ENCODE measurements at regions of chr16 and their contacts with region 1.

Region 1: GRCh38 chr16:10964039-10964890 is 19.9 kb downstream of the CLEC16A start:
- DNase-seq: peak; percentile 93
- H3K4me3 Mint-ChIP-seq: peak overlapping the region; percentile 60
- H3K27ac Mint-ChIP-seq: peak overlapping the region; percentile 98
- H3K4me1 Mint-ChIP-seq: peaks cover 77% of the 10 kb centered on the region
- H3K27me3 Mint-ChIP-seq: no peaks in the 10 kb centered on the region

Region 2: GRCh38 chr16:10828851-10829731 is 135.2 kb before region 1 on chr16:
- CTCF ChIA-PET with region 1: no interaction called
- POLR2A ChIA-PET with region 1: no interaction called
- intact Hi-C with region 1: no loop called
- DNase-seq: no peak
- H3K4me3 Mint-ChIP-seq: no peak overlapping the region
- H3K27ac Mint-ChIP-seq: no peak overlapping the region
- H3K4me1 Mint-ChIP-seq: no peaks in the 10 kb centered on the region
- H3K27me3 Mint-ChIP-seq: peaks cover 3% of the 10 kb centered on the region

Region 3: DNA sequence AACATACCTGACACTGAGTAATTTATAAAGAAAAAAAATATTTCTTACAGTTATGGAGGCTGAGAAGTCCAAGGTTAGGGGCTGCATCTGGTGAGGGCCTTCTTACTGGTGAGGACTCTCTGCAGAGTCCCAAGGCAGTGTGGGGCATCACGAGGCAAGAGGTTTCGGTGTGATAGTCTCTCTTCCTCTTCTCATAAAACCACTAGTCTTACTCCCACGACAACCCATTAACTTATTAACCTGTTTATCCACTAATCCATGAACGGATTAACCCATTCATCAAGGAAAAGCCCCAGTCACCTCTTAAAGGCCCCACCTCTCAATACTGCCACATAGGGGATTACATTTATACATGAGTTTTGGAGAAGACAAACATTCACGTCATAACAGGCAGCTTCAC is 67.1 kb before region 1 on chr16:
- CTCF ChIA-PET with region 1: no interaction called
- POLR2A ChIA-PET with region 1: no interaction called
- intact Hi-C with region 1: no loop called
- DNase-seq: no peak
- H3K4me3 Mint-ChIP-seq: no peak overlapping the region
- H3K27ac Mint-ChIP-seq: no peak overlapping the region
- H3K4me1 Mint-ChIP-seq: no peaks in the 10 kb centered on the region
- H3K27me3 Mint-ChIP-seq: peaks cover 1% of the 10 kb centered on the region

Region 4: GRCh38 chr16:10918294-10919002 is 45.8 kb before region 1 on chr16:
- CTCF ChIA-PET with region 1: no interaction called
- POLR2A ChIA-PET with region 1: no interaction called
- intact Hi-C with region 1: no loop called
- DNase-seq: peak; percentile 92
- H3K4me3 Mint-ChIP-seq: no peak overlapping the region
- H3K27ac Mint-ChIP-seq: no peak overlapping the region
- H3K4me1 Mint-ChIP-seq: peaks cover 15% of the 10 kb centered on the region
- H3K27me3 Mint-ChIP-seq: no peaks in the 10 kb centered on the region

Region 5: DNA sequence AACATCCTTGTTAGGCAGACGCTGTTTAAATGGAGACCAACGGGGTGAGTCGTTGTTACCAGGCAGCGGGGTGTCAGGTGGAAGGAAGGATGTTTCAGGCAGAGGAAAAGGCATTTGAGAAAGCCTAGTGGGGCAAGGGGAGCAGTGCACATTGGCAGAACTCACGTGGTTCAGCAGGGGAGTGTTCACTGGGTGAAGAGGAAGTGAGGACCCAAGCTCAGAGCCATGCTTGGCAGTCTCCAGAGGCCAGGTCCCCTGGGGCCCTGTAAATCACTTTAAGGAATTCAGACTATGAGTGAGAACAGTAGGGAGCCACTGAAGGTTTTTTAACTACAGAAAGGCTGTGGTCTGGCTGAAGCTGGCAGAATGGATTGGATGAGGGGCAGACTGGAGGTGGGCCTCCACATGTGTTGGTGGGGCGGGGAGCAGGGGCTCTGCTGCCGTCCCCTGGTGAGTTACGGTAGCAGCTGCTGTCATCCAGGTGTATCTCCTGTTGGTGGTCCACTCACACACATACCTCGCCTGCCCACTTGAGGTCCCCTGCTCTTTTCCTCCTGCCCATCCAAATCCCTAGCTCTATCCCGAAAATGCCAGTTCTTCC is 14.8 kb before region 1 on chr16:
- CTCF ChIA-PET with region 1: interaction called, 62 read pairs
- POLR2A ChIA-PET with region 1: interaction called, 7 read pairs
- intact Hi-C with region 1: no loop called
- DNase-seq: peak; percentile 69
- H3K4me3 Mint-ChIP-seq: no peak overlapping the region
- H3K27ac Mint-ChIP-seq: peak overlapping the region; percentile 42
- H3K4me1 Mint-ChIP-seq: peaks cover 56% of the 10 kb centered on the region
- H3K27me3 Mint-ChIP-seq: no peaks in the 10 kb centered on the region

Region 6: GRCh38 chr16:11051879-11052808 is 87.9 kb after region 1 on chr16:
- CTCF ChIA-PET with region 1: interaction called, 37 read pairs
- POLR2A ChIA-PET with region 1: interaction called, 11 read pairs
- intact Hi-C with region 1: loop called (anchors 1 kb)
- DNase-seq: peak; percentile 94
- H3K4me3 Mint-ChIP-seq: peak overlapping the region; percentile 24
- H3K27ac Mint-ChIP-seq: peak overlapping the region; percentile 94
- H3K4me1 Mint-ChIP-seq: peaks cover 64% of the 10 kb centered on the region
- H3K27me3 Mint-ChIP-seq: no peaks in the 10 kb centered on the region

Region 7: DNA sequence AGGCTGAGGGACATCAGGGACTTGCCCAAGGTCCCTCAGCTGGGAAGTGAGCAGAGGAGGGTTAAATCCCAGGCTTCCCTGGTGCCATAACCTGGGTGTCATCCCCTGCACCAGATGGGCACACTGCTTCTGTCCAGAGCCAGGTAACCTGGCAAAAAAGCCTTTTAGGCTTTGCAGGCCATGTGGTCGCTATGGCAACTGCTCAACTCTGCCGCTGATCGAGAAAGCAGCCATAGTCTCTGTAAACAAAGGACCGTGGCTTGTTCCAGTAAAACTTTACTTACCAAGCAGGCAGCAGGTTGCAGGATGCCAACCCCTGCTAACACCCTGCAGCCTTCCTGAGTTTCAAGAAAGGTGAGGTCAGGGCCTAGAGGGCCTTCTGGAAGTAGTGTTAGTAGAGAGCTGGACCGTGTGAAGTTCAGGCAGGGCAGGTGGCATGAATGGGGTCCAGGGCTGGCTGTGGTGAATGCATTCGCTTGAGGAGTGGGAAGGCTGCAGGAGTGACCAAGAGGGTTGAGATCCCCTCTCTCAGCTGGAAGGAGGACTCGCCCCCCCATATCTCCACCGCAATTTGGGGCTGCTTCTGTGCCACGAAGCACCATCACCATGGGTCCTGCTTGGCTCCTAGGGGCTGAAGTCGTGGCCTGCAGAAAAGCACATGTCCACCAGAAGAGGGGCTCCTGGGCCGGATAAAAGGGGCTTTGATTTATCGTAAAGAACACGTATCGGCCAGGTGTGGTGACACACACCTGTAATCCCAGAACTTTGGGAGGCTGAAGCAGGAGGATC is 200.4 kb after region 1 on chr16:
- CTCF ChIA-PET with region 1: interaction called, 7 read pairs
- POLR2A ChIA-PET with region 1: interaction called, 10 read pairs
- intact Hi-C with region 1: no loop called
- DNase-seq: no peak
- H3K4me3 Mint-ChIP-seq: no peak overlapping the region
- H3K27ac Mint-ChIP-seq: peak overlapping the region; percentile 24
- H3K4me1 Mint-ChIP-seq: peaks cover 26% of the 10 kb centered on the region
- H3K27me3 Mint-ChIP-seq: no peaks in the 10 kb centered on the region

Region 8: DNA sequence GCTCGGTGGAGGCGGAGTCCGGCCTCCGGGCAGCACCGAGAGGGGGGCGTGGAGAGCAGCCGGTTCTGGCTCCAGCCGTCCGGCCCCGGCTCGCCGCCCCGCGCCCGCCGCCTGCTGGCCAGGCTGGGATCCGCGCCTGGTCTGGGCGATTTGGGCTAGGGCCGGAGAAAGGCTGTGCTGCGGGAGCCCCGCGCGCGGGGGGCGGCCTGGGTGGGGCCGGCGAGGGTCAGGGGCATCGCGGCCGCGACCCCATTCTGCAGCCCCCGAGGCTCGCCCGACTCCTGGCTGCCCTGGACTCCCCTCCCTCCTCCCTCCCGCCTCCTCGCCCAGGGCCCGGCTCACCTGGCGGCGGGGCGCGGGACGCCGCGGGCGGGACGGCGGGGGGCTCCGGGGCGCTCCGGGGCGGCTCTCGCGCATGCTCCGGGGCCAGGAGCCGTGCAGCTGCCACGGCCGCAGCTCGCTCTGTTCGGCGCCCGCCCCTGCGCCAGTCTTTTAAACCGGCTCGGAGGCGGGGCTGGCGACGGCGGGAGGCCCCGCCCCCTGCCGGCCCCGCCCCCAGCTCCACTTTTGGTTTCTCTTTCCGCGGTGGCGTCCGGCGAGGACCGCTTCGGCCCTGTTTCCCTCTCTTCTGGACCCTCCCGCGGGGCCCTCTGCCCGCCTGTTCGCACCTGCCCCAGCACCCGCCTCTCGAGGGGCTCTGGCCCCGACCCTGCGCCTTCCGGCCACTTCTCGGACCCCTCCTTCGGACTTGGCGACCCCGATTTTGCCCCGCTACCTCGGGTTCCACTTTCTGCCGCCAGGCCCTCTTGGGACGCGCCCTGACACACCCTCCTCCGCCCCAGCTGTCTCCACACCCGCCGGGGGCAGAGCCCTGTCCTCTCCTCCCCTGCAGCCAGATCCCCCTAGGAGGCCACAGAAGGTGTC is 291.7 kb after region 1 on chr16 and contains the start of gene SOCS1:
- CTCF ChIA-PET with region 1: interaction called, 118 read pairs
- POLR2A ChIA-PET with region 1: interaction called, 93 read pairs
- intact Hi-C with region 1: loop called (anchors 1 kb)
- DNase-seq: peak; percentile 92
- H3K4me3 Mint-ChIP-seq: peak within 1 kb of the TSS; percentile 98
- H3K27ac Mint-ChIP-seq: peak within 1 kb of the TSS; percentile 99
- H3K4me1 Mint-ChIP-seq: peaks cover 48% of the 10 kb centered on the region
- H3K27me3 Mint-ChIP-seq: peaks cover 6% of the 10 kb centered on the region
- total RNA-seq, gene SOCS1: 146 to 152 TPM

Region 9: GRCh38 chr16:11379420-11379819 is 415.2 kb after region 1 on chr16:
- CTCF ChIA-PET with region 1: interaction called, 20 read pairs
- POLR2A ChIA-PET with region 1: interaction called, 6 read pairs
- intact Hi-C with region 1: loop called (anchors 1 kb)
- DNase-seq: peak; percentile 88
- H3K4me3 Mint-ChIP-seq: peak overlapping the region; percentile 9
- H3K27ac Mint-ChIP-seq: peak overlapping the region; percentile 79
- H3K4me1 Mint-ChIP-seq: peaks cover 23% of the 10 kb centered on the region
- H3K27me3 Mint-ChIP-seq: peaks cover 2% of the 10 kb centered on the region

Region 10: GRCh38 chr16:11667824-11668622 is 703.8 kb after region 1 on chr16 and contains the start of gene SNN:
- CTCF ChIA-PET with region 1: interaction called, 3 read pairs
- POLR2A ChIA-PET with region 1: no interaction called
- intact Hi-C with region 1: loop called (anchors 10 kb)
- DNase-seq: peak; percentile 91
- H3K4me3 Mint-ChIP-seq: peak within 1 kb of the TSS; percentile 72
- H3K27ac Mint-ChIP-seq: peak within 1 kb of the TSS; percentile 5
- H3K4me1 Mint-ChIP-seq: peaks cover 70% of the 10 kb centered on the region
- H3K27me3 Mint-ChIP-seq: no peaks in the 10 kb centered on the region
- total RNA-seq, gene SNN: 9.1 TPM